Endothelial cell of umbilical vein (primary cell): ENCODE measurements at regions of chr6 and their contacts with region 1.

Region 1: DNA sequence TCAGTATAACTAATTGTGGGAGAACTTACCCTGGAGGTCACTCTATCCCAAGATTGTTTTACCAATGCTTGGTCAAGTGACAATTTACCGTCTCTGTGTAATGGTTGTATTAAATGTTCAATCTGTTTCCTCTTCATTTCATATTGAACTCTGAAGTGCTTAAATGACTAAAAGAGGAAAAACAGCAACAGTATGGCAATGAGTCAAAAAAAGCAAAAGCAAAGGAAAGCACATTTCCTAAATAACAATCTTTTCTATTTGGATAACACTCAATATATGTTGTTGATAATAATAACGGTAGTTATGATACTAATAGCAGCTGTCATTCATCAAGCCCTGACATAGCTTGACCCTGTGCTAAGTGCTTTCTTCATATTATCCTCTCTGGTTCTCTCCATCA is 152.4 kb downstream of the SYNE1 start:
- DNase-seq: peak; percentile 92
- H3K4me3 ChIP-seq: no peak overlapping the region
- H3K27ac ChIP-seq: no peak overlapping the region
- H3K4me1 ChIP-seq: peaks cover 14% of the 10 kb centered on the region
- H3K27me3 ChIP-seq: no peaks in the 10 kb centered on the region
- CTCF ChIP-seq: no peak
- POLR2A ChIP-seq: no peak

Region 2: DNA sequence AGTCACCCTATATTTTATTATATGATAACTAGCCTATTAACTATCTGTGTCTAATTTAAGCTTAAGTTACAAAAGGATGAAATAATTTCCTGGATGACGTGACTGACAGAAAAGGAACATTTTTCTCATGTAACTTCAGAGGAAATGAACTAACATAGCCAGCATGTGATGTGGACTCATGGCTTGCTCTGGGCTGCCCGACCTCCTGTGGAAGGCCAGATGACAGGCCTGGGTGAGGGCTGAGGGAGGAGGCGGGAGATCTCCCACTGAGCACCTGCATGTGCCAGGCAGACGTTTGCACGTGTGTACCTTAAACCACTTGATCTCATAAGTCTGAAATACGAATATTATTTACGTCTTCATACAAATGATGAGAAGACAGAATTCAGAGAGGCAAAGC is 168.8 kb before region 1 on chr6:
- CTCF ChIA-PET with region 1: no interaction called
- POLR2A ChIA-PET with region 1: no interaction called
- dilution Hi-C with region 1: no loop called
- intact Hi-C with region 1: no loop called
- DNase-seq: peak; percentile 93
- H3K4me3 ChIP-seq: no peak overlapping the region
- H3K27ac ChIP-seq: peak overlapping the region; percentile 87
- H3K4me1 ChIP-seq: peaks cover 32% of the 10 kb centered on the region
- H3K27me3 ChIP-seq: no peaks in the 10 kb centered on the region
- CTCF ChIP-seq: no peak
- POLR2A ChIP-seq: peak; percentile 47

Region 3: GRCh38 chr6:152368761-152369624 is 115.8 kb before region 1 on chr6:
- CTCF ChIA-PET with region 1: no interaction called
- POLR2A ChIA-PET with region 1: no interaction called
- dilution Hi-C with region 1: no loop called
- intact Hi-C with region 1: no loop called
- DNase-seq: peak; percentile 33
- H3K4me3 ChIP-seq: no peak overlapping the region
- H3K27ac ChIP-seq: no peak overlapping the region
- H3K4me1 ChIP-seq: no peaks in the 10 kb centered on the region
- H3K27me3 ChIP-seq: no peaks in the 10 kb centered on the region
- CTCF ChIP-seq: no peak
- POLR2A ChIP-seq: no peak

Region 4: DNA sequence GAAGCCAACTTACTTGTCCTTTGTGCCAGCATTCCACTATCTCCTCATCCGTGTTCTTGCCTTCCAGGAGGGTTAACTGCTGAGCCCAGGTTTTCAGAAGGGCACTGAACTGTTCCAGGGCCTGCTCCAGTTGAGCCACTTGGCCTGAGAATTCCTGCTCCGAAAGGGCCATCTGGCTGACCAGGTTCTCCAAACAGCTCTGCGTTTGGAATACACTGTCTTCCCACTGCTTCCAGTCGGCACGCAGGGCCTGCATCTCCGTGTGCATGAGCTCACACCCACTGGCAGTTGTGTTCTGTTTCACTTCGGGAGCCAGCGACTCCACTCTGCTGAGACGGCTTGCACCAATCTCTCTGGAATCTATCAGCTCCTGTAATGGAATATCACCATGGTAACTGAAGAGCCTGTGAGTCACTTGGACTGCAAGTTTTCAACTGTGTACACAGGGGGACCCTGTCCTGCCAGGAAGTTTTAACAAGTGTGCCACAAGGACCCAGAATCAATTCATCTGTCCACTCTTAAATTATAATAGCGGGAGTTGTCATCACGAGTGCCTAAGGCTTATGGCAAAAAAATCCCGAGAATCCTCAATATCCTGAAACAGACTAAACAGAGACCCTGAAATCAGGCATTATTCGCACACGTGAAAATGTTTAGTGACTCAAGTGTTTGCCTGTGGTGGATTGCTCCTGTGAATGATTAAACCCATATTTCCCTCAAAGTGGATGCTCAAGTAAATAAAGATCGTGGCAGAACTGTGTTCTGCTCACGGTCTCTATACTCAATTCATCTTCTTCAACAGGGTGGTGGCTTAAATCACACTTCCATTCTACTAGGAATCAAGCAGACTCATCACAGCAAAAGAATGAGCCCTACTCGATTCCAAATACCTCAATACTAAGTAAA is 103.6 kb before region 1 on chr6:
- CTCF ChIA-PET with region 1: interaction called, 13 read pairs
- POLR2A ChIA-PET with region 1: no interaction called
- dilution Hi-C with region 1: no loop called
- intact Hi-C with region 1: no loop called
- DNase-seq: peak; percentile 95
- H3K4me3 ChIP-seq: peak overlapping the region; percentile 50 to 84 (median 53)
- H3K27ac ChIP-seq: peak overlapping the region; percentile 96
- H3K4me1 ChIP-seq: peaks cover 23% of the 10 kb centered on the region
- H3K27me3 ChIP-seq: no peaks in the 10 kb centered on the region
- CTCF ChIP-seq: no peak
- POLR2A ChIP-seq: no peak

Region 5: DNA sequence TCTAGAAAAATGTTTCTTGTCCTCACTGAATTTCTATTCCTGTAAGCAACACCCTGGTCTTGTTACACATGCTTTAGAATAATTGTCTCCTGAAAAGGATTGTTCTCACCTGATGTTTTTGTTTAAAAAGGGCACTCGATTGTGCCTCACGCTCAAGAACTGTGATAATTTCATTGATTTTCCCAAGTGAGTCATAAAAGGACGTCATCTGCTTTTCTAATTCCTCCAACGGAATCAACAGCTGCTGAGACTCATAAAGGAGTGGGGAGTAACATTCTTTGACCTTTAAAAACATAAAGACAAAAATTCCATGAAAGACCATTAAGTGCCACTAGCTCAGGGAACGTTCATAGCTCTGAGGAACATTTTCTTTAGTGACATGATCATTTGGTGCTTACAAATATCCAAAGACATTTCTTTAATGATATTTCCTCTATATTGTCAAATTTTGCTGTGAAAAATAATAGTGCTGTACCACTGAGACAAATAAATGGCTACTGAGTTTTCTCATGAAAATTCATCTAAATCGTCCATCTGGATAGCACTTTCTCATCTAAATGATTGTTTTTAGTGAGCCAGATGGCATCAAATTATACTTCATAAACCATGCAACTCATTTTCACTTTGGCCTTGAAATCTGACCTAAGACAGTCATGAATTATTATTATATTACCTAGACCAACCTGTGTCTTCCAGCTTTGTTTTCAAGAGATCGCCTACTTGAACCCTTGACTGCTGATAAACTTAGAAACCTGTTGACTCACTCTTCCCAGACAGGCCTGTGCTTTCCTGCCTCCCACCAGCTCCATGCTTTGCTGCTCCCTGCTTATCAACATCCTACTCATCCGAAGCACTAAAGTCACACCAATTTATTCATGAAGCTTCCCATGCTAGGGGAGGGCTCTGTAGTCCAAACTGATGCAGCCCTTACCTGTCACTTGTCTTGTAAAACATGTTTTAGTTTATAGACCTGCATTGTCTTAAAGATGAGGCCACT is 25.9 kb before region 1 on chr6:
- CTCF ChIA-PET with region 1: interaction called, 11 read pairs
- POLR2A ChIA-PET with region 1: no interaction called
- dilution Hi-C with region 1: no loop called
- intact Hi-C with region 1: loop called (anchors 1 kb)
- DNase-seq: peak; percentile 48
- H3K4me3 ChIP-seq: no peak overlapping the region
- H3K27ac ChIP-seq: no peak overlapping the region
- H3K4me1 ChIP-seq: peaks cover 17% of the 10 kb centered on the region
- H3K27me3 ChIP-seq: no peaks in the 10 kb centered on the region
- CTCF ChIP-seq: no peak
- POLR2A ChIP-seq: no peak

Region 6: DNA sequence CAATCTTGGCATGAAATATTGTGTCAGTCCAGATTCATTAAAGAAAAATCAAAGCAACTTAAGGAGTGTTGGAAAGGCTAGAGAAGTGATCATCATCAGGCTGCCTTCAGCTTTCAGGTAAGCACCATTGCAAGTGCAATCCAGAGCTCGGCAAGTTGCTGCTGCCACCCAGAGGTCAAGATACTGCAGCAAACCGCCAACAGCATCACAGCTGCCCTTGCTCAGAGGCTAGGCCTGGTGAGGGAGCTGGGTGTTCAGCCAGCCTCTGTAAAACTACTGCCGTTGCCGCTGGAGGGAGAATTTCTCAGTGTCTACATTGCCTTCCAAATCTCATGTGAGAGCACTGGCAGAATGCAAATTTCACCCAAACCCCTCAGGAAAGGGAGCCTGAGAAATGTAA is 158.2 kb after region 1 on chr6:
- CTCF ChIA-PET with region 1: interaction called, 18 read pairs
- POLR2A ChIA-PET with region 1: no interaction called
- dilution Hi-C with region 1: no loop called
- intact Hi-C with region 1: loop called (anchors 2 kb)
- DNase-seq: peak; percentile 59
- H3K4me3 ChIP-seq: no peak overlapping the region
- H3K27ac ChIP-seq: no peak overlapping the region
- H3K4me1 ChIP-seq: no peaks in the 10 kb centered on the region
- H3K27me3 ChIP-seq: peaks cover 0 to under 1% of the 10 kb centered on the region in 2 experiments
- CTCF ChIP-seq: peak; percentile 32 to 71
- POLR2A ChIP-seq: no peak

Region 7: DNA sequence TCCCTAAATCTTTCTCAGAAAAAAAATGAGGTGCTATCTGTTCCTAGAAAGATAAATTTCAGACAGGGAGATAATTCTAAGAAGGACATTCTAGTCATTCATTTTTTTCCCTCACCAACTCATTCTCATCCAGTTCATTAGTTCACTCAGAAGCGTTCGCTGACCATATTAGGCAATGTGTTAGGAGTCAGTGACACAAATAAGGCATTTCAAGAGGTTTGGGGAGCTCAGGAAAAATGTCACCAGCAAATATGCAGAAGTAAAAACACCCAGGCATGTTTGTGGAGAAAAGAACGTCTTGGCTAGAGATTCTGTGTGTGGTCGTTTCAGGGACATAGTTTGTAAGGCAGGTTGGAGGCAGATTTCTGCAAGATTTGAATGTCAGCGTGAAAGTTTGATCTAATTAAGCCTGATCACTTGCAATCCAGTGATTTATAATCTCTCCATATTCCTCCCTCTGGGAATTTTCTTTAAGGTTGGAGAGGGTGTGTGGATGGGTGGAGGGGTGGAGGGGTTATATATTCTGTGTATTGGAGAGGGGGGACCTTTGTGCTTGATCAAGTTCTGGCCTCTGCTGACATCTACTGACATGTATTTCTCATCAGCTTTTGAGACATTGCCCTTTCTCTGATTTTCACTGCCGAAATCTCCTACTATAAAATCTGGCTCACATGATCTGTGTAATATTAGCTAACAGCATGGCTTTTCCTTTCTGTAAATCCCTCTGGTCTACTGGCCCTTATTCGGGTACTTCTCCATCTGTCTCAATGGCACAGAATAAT is 216.5 kb after region 1 on chr6:
- CTCF ChIA-PET with region 1: interaction called, 10 read pairs
- POLR2A ChIA-PET with region 1: no interaction called
- dilution Hi-C with region 1: no loop called
- intact Hi-C with region 1: loop called (anchors 1 kb)
- DNase-seq: peak; percentile 59
- H3K4me3 ChIP-seq: peak overlapping the region; percentile 57 to 97 (median 88)
- H3K27ac ChIP-seq: peak overlapping the region; percentile 92
- H3K4me1 ChIP-seq: peaks cover 42% of the 10 kb centered on the region
- H3K27me3 ChIP-seq: no peaks in the 10 kb centered on the region
- CTCF ChIP-seq: peak in 1 of 2 donors; percentile 3
- POLR2A ChIP-seq: no peak

Region 8: GRCh38 chr6:152948150-152948768 is 463.5 kb after region 1 on chr6:
- CTCF ChIA-PET with region 1: interaction called, 16 read pairs
- POLR2A ChIA-PET with region 1: no interaction called
- dilution Hi-C with region 1: no loop called
- intact Hi-C with region 1: loop called (anchors 1 kb)
- DNase-seq: peak; percentile 64
- H3K4me3 ChIP-seq: no peak overlapping the region
- H3K27ac ChIP-seq: no peak overlapping the region
- H3K4me1 ChIP-seq: peaks cover 11% of the 10 kb centered on the region
- H3K27me3 ChIP-seq: no peaks in the 10 kb centered on the region
- CTCF ChIP-seq: peak; percentile 41 to 46
- POLR2A ChIP-seq: no peak

Region 9: GRCh38 chr6:153084409-153084808 is 599.6 kb after region 1 on chr6:
- CTCF ChIA-PET with region 1: no interaction called
- POLR2A ChIA-PET with region 1: no interaction called
- dilution Hi-C with region 1: no loop called
- intact Hi-C with region 1: no loop called
- DNase-seq: no peak
- H3K4me3 ChIP-seq: no peak overlapping the region
- H3K27ac ChIP-seq: no peak overlapping the region
- H3K4me1 ChIP-seq: peaks cover 7% of the 10 kb centered on the region
- H3K27me3 ChIP-seq: no peaks in the 10 kb centered on the region
- CTCF ChIP-seq: no peak
- POLR2A ChIP-seq: no peak